Activated naive CD4-positive, alpha-beta T cell treated with anti-CD3 and anti-CD28 coated beads for 36 hours (primary cell): ENCODE measurements at regions of chr6 and their contacts with region 1.

Region 1: GRCh38 chr6:10478187-10479040 is 42.7 kb upstream of the GCNT2 start:
- DNase-seq: no peak
- H3K4me3 Mint-ChIP-seq: no peak overlapping the region
- H3K27ac Mint-ChIP-seq: no peak overlapping the region
- H3K4me1 Mint-ChIP-seq: no peaks in the 10 kb centered on the region
- H3K27me3 Mint-ChIP-seq: peaks cover 13% of the 10 kb centered on the region

Region 2: DNA sequence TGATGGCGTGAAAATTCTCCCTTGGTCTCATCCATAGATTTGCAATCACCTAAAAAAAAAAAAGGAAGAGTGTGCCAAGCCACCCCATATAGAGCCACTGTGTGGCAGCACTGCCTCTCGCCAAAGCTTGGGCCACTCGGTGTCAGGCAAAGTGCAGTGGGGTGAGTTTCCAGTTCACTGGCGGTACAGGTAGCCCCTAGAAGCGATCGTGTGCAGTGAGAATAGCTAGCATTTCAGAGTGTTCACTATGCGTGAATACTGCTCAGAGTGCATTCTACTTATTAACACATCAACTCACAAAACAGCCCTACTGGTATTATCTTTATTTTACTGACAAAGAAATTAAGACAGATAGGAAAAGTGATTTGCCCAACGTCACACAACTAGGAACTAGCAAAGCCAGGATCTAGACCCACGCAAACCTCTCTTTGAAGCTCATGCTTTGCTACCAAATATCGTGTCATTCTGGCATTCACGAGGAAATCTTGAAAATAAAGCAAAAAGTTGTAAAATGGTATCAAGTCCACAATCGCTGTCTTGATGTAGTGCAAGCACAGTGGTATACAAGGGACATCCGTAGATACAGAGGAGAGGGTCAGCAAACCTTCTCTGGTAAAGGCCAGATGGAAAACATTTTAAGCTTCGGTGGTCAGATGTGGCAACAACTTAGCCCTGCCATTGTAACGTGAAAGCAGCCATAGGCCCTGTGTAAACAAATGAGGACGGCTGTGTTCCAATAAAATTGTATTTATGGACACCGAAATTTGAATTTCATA is 32.4 kb after region 1 on chr6:
- CTCF ChIA-PET with region 1: interaction called, 14 read pairs
- intact Hi-C with region 1: no loop called
- DNase-seq: peak; percentile 70
- H3K4me3 Mint-ChIP-seq: no peak overlapping the region
- H3K27ac Mint-ChIP-seq: no peak overlapping the region
- H3K4me1 Mint-ChIP-seq: no peaks in the 10 kb centered on the region
- H3K27me3 Mint-ChIP-seq: peaks cover 5% of the 10 kb centered on the region

Region 3: DNA sequence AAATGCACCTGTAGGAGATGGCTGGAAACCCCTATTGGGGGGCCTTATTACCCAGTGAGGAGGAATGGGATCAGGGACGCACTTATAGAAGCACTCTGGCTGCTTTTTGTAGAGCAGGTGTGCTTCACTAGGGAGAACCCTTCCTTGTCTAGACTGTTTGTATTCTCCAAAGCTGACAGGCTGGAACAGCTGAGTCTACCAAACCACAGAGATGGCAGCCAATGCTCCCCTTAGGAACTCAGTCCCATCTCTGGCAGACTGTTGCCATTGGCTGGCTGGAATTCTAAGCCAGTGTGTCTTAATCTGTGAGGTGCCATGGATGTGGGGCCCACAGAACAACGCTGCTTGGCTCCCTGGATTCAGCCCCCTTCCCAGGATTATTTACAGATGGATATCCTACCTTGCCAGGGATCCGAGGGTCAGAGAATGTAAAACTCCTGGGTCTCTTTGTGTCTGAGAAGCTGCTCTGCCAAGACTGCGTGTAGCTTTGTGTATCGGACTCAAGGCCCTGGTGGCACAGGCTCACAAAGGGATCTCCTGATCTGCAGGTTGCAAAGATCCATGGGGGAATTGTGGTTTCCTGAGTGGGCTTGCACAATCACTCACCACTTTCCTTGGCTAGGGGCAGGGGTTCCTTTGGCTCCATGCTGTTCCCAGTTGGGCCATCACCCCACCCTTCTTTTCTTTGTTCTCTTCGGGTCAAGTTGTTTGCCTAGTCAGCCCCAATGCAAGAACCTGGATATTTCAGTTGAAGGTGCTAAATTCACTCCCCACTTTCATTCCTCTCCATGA is 189.9 kb after region 1 on chr6:
- CTCF ChIA-PET with region 1: interaction called, 11 read pairs
- intact Hi-C with region 1: no loop called
- DNase-seq: no peak
- H3K4me3 Mint-ChIP-seq: no peak overlapping the region
- H3K27ac Mint-ChIP-seq: no peak overlapping the region
- H3K4me1 Mint-ChIP-seq: peaks cover 5% of the 10 kb centered on the region
- H3K27me3 Mint-ChIP-seq: peaks cover 12% of the 10 kb centered on the region

Region 4: GRCh38 chr6:10800829-10801535 is 322.6 kb after region 1 on chr6:
- CTCF ChIA-PET with region 1: interaction called, 29 read pairs
- intact Hi-C with region 1: loop called (anchors 1 kb)
- DNase-seq: peak; percentile 75
- H3K4me3 Mint-ChIP-seq: no peak overlapping the region
- H3K27ac Mint-ChIP-seq: no peak overlapping the region
- H3K4me1 Mint-ChIP-seq: no peaks in the 10 kb centered on the region
- H3K27me3 Mint-ChIP-seq: no peaks in the 10 kb centered on the region

Region 5: GRCh38 chr6:11067348-11067747 is 588.9 kb after region 1 on chr6:
- CTCF ChIA-PET with region 1: interaction called, 11 read pairs
- intact Hi-C with region 1: loop called (anchors 1 kb)
- DNase-seq: no peak
- H3K4me3 Mint-ChIP-seq: no peak overlapping the region
- H3K27ac Mint-ChIP-seq: no peak overlapping the region
- H3K4me1 Mint-ChIP-seq: no peaks in the 10 kb centered on the region
- H3K27me3 Mint-ChIP-seq: peaks cover 3% of the 10 kb centered on the region